Vagina (tissue), 2 donors: ENCODE measurements at regions of chr1 and their contacts with region 1.

Region 1: DNA sequence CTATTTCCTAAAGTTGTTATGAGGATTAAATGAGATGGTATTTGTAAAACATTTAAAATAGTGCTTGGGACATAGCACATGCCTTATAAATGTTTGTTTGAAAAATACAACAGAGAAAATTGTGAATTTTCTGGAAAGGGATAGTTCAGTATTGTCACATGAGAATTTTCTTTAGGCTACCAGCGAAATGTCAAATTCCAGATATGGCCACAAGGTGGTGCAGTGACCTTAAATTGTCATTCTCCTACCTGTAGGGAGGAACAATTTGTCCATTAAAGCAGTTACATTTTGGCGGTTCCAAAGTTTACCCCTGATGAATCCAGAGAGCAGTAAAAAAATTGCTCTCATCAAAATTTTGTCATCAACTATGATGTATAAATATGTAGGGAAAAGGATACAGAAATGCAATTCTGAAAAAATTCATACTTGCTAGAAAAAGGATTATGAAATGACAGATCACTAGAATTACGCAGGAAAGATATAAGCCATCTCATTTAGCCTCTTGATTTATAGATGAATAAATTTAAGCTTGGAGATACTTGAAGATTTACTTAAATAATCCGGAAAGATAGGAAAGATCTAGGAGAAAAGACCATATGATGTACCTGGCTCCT is 50.2 kb upstream of the TSHB start:
- DNase-seq: no peak
- H3K4me3 ChIP-seq: no peak overlapping the region
- H3K27ac ChIP-seq: no peak overlapping the region
- H3K4me1 ChIP-seq: no peaks in the 10 kb centered on the region
- H3K27me3 ChIP-seq: no peaks in the 10 kb centered on the region
- CTCF ChIP-seq: peak; percentile 74 to 76 (median 75)
- POLR2A ChIP-seq: no peak

Region 2: GRCh38 chr1:115112496-115113375 is 133.4 kb after region 1 on chr1:
- intact Hi-C with region 1: loop called (anchors 2 kb)
- DNase-seq: no peak
- H3K4me3 ChIP-seq: no peak overlapping the region
- H3K27ac ChIP-seq: no peak overlapping the region
- H3K4me1 ChIP-seq: no peaks in the 10 kb centered on the region
- H3K27me3 ChIP-seq: no peaks in the 10 kb centered on the region
- CTCF ChIP-seq: peak; percentile 68 to 87 (median 84)
- POLR2A ChIP-seq: no peak

Region 3: DNA sequence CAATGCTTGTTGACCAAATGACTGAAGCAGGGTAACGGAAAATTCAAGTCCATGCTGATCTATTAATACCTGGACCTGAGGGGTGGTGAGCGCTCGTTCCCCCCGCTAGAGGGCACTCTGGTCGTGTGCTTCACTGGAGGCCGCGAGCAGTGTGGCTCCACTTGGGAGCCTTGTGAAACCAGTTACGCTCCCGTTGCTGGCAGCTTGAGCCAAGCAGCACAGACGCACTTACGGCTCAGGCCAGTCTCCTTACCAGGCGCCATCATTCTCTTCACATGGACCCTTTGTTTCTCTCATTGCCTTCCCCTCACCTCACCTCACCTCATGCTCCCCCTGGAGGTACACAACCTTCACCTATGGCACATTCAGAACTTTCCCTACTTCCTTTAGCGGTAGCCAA is 159.6 kb after region 1 on chr1:
- intact Hi-C with region 1: no loop called
- DNase-seq: peak in 1 of 2 donors; percentile 92
- H3K4me3 ChIP-seq: no peak overlapping the region
- H3K27ac ChIP-seq: no peak overlapping the region
- H3K4me1 ChIP-seq: peaks cover 12% of the 10 kb centered on the region
- H3K27me3 ChIP-seq: no peaks in the 10 kb centered on the region
- CTCF ChIP-seq: peak; percentile 68 to 84 (median 83)
- POLR2A ChIP-seq: no peak